PC-9 (cell line): ENCODE measurements at regions of chr4 and their contacts with region 1.

Region 1: GRCh38 chr4:157616741-157617472 is 396.4 kb downstream of the GRIA2 start:
- DNase-seq: no peak
- H3K4me3 ChIP-seq: no peak overlapping the region
- H3K27ac ChIP-seq: no peak overlapping the region
- H3K4me1 ChIP-seq: no peaks in the 10 kb centered on the region
- H3K27me3 ChIP-seq: no peaks in the 10 kb centered on the region
- CTCF ChIP-seq: no peak

Region 2: DNA sequence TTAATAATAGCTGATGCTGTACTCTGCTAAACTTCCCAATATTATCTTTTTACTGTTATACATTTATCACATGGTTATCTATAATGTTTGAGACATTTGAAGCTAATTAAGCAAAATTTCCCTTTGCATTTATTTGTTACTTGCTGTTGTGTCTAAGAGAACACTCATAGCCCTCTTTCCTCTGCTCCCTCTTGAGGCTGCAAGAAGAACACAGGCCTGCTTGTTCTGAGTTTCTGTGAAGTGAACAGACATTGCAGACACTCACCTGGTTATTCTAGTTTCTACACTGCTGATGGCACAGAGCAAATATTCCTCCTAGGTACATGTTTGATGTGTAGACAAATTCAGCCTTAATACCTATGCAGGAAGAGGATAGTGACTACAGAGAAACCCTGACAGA is 188.1 kb after region 1 on chr4:
- CTCF ChIA-PET with region 1: interaction called, 12 read pairs
- POLR2A ChIA-PET with region 1: no interaction called
- intact Hi-C with region 1: no loop called
- DNase-seq: no peak
- H3K4me3 ChIP-seq: no peak overlapping the region
- H3K27ac ChIP-seq: no peak overlapping the region
- H3K4me1 ChIP-seq: no peaks in the 10 kb centered on the region
- H3K27me3 ChIP-seq: no peaks in the 10 kb centered on the region
- CTCF ChIP-seq: no peak